ENCODE measurements at regions of chr12 and their contacts with region 1.

Region 1: GRCh38 chr12:102948941-102949352 is 8.5 kb upstream of the ASCL1 start:
- DNase-seq: no peak
- H3K4me3 ChIP-seq: no peak overlapping the region
- CTCF ChIP-seq: peak; percentile 72

Region 2: GRCh38 chr12:102992297-102992696 is 43.4 kb after region 1 on chr12:
- CTCF ChIA-PET with region 1: no interaction called
- POLR2A ChIA-PET with region 1: no interaction called
- DNase-seq: no peak
- H3K4me3 ChIP-seq: no peak overlapping the region
- CTCF ChIP-seq: no peak

Region 3: DNA sequence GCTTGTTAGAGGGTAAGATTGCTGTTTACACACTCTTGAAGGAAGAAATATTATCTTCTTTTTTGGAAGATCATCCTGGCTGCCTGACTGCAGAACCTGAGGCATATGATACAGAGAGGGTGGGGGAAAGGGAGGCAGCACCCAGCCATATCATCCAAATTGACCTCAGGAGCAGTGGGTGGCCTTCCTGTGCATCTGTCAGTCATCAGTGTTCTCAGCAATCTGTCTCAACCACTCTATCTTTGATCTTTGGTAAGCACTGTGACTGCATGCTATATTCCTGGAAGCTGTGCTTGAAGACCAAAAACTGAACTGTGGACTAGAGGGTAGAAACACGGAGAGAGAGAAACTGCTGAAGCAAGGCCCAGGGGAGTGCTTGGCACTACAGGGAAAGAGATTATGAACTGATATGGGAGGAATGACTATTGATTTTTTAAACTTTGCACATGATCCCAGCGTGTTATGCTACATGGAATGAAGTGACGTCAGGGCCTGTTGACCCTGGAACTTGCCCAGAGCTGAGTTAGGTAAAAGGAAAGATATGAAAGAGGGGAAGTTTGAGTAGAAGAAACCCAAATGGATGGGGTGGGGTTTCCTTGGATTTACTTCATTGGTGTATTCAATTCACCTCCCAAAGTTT is 180.0 kb after region 1 on chr12:
- CTCF ChIA-PET with region 1: no interaction called
- POLR2A ChIA-PET with region 1: no interaction called
- DNase-seq: no peak
- H3K4me3 ChIP-seq: no peak overlapping the region
- CTCF ChIP-seq: no peak

Region 4: GRCh38 chr12:103538397-103538796 is 589.5 kb after region 1 on chr12:
- CTCF ChIA-PET with region 1: interaction called, 17 read pairs
- POLR2A ChIA-PET with region 1: no interaction called
- DNase-seq: no peak
- H3K4me3 ChIP-seq: no peak overlapping the region
- CTCF ChIP-seq: no peak